Activated CD8-positive, alpha-beta T cell treated with anti-CD3 and anti-CD28 coated beads for 36 hours (primary cell): ENCODE measurements at regions of chr6 and their contacts with region 1.

Region 1: DNA sequence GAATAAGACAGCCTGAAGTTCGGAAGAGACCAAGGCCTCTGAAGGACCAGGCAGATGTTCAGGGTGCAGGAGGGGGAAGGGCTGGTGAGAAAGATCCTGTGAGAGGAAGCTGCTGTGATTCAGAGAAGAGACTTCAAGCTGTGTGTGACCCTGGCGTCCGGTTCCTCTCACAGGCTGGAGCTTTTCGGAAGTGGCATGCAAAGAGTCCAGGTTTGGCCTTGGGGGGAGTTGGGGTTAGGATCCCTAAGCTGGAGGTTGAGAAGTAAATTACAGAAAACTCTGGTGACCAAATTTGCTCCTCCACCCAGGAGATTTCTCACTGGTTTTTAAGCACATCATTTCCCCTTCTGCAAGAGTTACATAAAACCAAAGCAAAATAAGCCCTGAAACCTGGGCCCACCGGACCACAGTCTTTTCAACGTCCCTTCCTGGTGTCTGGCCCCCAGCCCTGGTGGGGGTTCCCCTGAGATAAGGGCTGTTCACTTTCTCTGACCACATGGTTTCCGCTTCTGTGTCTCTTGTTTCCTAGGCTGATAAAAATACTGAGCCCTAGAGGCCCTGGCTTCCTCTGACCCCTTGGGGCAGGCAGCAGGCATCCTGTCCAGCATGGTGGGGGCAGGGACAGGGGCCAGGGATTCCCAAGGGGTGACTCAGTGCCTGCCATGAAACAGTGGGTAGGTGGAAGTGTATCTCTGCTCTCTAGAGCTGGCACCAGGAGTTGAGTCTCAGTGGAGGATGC is 12.0 kb upstream of the LTA start:
- DNase-seq: peak; percentile 86
- ATAC-seq: peak; percentile 69
- H3K4me3 Mint-ChIP-seq: peak overlapping the region; percentile 56
- H3K27ac Mint-ChIP-seq: peak overlapping the region; percentile 90
- H3K4me1 Mint-ChIP-seq: peaks cover 78% of the 10 kb centered on the region
- H3K27me3 Mint-ChIP-seq: no peaks in the 10 kb centered on the region
- CTCF ChIP-seq: no peak

Region 2: DNA sequence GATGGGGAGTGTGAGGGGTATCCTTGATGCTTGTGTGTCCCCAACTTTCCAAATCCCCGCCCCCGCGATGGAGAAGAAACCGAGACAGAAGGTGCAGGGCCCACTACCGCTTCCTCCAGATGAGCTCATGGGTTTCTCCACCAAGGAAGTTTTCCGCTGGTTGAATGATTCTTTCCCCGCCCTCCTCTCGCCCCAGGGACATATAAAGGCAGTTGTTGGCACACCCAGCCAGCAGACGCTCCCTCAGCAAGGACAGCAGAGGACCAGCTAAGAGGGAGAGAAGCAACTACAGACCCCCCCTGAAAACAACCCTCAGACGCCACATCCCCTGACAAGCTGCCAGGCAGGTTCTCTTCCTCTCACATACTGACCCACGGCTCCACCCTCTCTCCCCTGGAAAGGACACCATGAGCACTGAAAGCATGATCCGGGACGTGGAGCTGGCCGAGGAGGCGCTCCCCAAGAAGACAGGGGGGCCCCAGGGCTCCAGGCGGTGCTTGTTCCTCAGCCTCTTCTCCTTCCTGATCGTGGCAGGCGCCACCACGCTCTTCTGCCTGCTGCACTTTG is 15.3 kb after region 1 on chr6 and contains the start of gene TNF:
- CTCF ChIA-PET with region 1: interaction called, 2,542 read pairs
- POLR2A ChIA-PET with region 1: interaction called, 1,181 read pairs
- intact Hi-C with region 1: loop called (anchors 2 kb)
- DNase-seq: peak; percentile 87
- ATAC-seq: peak; percentile 21
- H3K4me3 Mint-ChIP-seq: peak within 1 kb of the TSS; percentile 96
- H3K27ac Mint-ChIP-seq: peak within 1 kb of the TSS; percentile 97
- H3K4me1 Mint-ChIP-seq: peaks cover 54% of the 10 kb centered on the region
- H3K27me3 Mint-ChIP-seq: no peaks in the 10 kb centered on the region
- CTCF ChIP-seq: no peak
- total RNA-seq, gene TNF: 89.2 to 92.5 TPM

Region 3: GRCh38 chr6:31827286-31828079 is 267.4 kb after region 1 on chr6 and contains the start of gene HSPA1B:
- CTCF ChIA-PET with region 1: no interaction called
- POLR2A ChIA-PET with region 1: no interaction called
- intact Hi-C with region 1: loop called (anchors 10 kb)
- DNase-seq: peak; percentile 98
- ATAC-seq: peak; percentile 82
- H3K4me3 Mint-ChIP-seq: peak within 1 kb of the TSS; percentile 81
- H3K27ac Mint-ChIP-seq: peak within 1 kb of the TSS; percentile 90
- H3K4me1 Mint-ChIP-seq: peaks cover 36% of the 10 kb centered on the region
- H3K27me3 Mint-ChIP-seq: no peaks in the 10 kb centered on the region
- CTCF ChIP-seq: no peak
- total RNA-seq, gene HSPA1B: 50.4 to 50.8 TPM